Tibial artery (tissue), 4 donors: ENCODE measurements at regions of chr11 and their contacts with region 1.

Region 1: DNA sequence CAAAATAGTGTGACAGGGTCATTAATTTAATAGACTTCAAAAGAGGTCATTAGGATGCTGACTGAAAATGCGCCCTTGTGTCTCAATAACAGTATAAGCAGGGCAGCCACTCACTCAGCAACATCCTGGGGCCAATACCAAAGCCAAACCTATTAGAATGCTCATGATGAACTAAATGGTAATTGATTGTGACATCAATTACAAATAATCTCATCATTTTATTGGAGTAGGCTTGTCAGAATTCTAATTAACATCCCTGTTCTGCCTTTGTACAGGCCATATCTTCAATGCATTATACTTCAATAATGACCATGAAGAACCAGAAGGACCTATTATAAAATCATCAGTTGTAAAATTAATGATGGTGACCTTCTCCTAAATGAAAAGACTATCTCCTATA is 64.2 kb downstream of the DNAJC24 start:
- DNase-seq: no peak
- H3K4me3 ChIP-seq: no peak overlapping the region
- H3K27ac ChIP-seq: no peak overlapping the region
- H3K4me1 ChIP-seq: no peaks in the 10 kb centered on the region
- H3K27me3 ChIP-seq: no peaks in the 10 kb centered on the region
- CTCF ChIP-seq: no peak

Region 2: GRCh38 chr11:31417357-31417756 is 16.5 kb before region 1 on chr11:
- intact Hi-C with region 1: loop called (anchors 2 kb)
- DNase-seq: no peak
- H3K4me3 ChIP-seq: no peak overlapping the region
- H3K27ac ChIP-seq: no peak overlapping the region
- H3K4me1 ChIP-seq: no peaks in the 10 kb centered on the region
- H3K27me3 ChIP-seq: no peaks in the 10 kb centered on the region
- CTCF ChIP-seq: no peak

Region 3: DNA sequence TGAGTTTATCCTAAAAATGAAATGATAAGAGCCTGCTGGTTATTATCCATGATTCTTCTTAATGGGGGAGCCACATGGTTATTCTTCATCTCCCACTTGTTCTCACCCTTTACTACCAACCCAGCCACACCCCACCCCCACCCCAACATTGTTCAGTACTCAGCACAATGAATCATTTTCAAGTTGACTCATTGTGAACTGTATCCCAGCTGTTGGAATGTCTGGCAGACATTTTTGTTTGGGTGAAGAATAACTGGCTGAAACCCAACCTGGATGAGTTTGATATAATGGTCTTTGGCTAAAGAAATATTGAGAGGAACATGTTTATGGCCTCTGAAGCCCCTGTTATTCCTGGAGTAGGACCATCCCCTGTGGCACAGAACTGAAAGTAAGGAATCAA is 211.9 kb after region 1 on chr11:
- intact Hi-C with region 1: no loop called
- DNase-seq: no peak
- H3K4me3 ChIP-seq: no peak overlapping the region
- H3K27ac ChIP-seq: no peak overlapping the region
- H3K4me1 ChIP-seq: peaks cover 0 to 8% (median 3%) of the 10 kb centered on the region in 4 donors
- H3K27me3 ChIP-seq: no peaks in the 10 kb centered on the region
- CTCF ChIP-seq: no peak